ENCODE measurements at regions of chr1 and their contacts with region 1.

Region 1: GRCh38 chr1:52904927-52905698 is 16.4 kb downstream of the ECHDC2 start:
- DNase-seq: peak; percentile 76
- H3K4me3 Mint-ChIP-seq: no peak overlapping the region
- H3K27ac Mint-ChIP-seq: no peak overlapping the region
- H3K4me1 Mint-ChIP-seq: peaks cover 2% of the 10 kb centered on the region
- H3K27me3 Mint-ChIP-seq: no peaks in the 10 kb centered on the region

Region 2: DNA sequence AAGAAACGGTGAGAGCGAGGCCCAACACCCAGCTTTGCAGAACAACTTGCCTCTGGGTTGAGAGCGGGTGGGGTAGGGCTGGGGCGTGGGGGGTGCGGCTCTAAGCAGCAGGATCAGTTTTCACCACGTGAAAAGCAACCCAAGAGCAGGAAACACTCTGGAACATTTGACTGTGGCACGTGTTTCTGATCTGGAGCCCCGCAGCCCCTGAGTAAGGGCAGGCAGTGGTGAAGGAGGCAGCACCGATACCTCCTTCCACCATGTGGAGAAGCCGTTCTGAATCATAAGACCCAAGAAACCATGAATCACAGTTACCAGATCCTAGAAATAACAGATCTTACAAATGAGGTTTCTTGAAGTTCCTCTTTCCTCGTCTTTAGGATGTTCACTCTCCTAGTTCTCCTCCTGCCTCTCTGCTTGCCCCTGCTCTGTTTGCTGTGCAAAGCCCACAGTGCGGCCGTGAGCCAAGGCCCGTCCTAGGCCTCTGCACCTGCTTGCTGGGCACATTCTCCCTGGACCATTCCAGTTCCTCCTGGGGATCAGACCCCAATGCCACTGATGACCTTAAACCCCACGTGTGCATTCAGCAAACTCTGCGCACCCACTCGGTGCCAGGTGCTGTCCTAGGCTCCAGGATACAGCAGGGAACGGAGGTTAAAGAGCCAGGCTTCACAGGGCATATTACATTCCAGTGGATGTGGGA is 205.4 kb after region 1 on chr1:
- intact Hi-C with region 1: no loop called
- DNase-seq: no peak
- H3K4me3 Mint-ChIP-seq: no peak overlapping the region
- H3K27ac Mint-ChIP-seq: peak overlapping the region; percentile 9
- H3K4me1 Mint-ChIP-seq: peaks cover 17% of the 10 kb centered on the region
- H3K27me3 Mint-ChIP-seq: peaks cover 3% of the 10 kb centered on the region

Region 3: GRCh38 chr1:53182111-53182593 is 277.0 kb after region 1 on chr1:
- intact Hi-C with region 1: loop called (anchors 5 kb)
- DNase-seq: peak; percentile 94
- H3K4me3 Mint-ChIP-seq: no peak overlapping the region
- H3K27ac Mint-ChIP-seq: no peak overlapping the region
- H3K4me1 Mint-ChIP-seq: no peaks in the 10 kb centered on the region
- H3K27me3 Mint-ChIP-seq: peaks cover 13% of the 10 kb centered on the region

Region 4: GRCh38 chr1:53417003-53417570 is 512.0 kb after region 1 on chr1:
- intact Hi-C with region 1: no loop called
- DNase-seq: no peak
- H3K4me3 Mint-ChIP-seq: peak overlapping the region; percentile 5
- H3K27ac Mint-ChIP-seq: peak overlapping the region; percentile 77
- H3K4me1 Mint-ChIP-seq: peaks cover 60% of the 10 kb centered on the region
- H3K27me3 Mint-ChIP-seq: peaks cover 6% of the 10 kb centered on the region